HEK293 (cell line): ENCODE measurements at regions of chr11 and their contacts with region 1.

Region 1: DNA sequence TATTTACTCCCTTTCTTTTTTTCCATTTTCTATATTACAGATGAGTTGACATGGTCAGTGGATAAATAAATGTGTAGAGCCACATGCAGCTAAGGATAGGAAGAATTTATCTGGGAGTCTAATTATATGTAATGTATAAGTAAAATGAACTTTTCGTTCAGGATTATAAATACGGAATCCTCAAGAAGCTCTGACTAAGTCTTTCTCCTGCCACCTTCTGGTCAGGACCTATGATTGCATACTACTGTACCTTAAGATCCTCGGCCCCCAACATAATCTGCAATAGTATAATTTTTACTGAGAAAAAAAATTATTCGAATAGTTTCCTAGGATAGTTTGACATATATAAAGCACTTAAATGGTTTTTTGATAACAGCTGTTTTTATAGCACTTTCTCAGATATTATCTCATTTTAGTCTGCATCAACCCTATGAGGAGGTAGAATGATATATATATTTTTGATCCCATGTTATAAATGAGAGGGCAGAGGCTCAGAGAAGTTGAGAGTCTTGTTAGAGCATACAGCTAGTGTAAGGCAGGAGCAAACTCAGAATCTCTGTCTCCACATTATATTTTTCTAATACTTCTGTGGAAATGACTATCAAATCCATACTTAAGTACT is 36.1 kb downstream of the CCDC90B start:
- H3K4me3 ChIP-seq: no peak overlapping the region
- H3K27ac ChIP-seq: no peak overlapping the region
- H3K4me1 ChIP-seq: no peaks in the 10 kb centered on the region
- CTCF ChIP-seq: no peak

Region 2: DNA sequence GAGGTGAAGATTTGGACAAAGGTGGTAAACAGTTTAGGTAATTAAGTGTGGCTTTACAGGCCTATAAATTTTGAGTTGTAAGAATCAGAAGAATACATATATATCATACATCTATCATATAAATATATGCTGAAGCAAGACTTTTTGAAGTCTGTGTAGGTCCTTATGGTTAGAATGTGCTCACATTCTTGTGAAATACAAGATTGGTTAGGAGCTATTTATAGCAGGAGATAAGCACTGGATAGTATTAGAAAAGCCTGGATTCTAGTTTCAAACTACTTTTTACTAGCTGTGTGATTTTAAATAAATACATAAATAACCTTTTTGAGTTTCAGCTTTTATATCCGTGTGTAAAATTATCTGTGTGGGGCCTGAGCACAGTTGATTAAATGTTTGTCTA is 14.3 kb before region 1 on chr11:
- CTCF ChIA-PET with region 1: interaction called, 29 read pairs
- POLR2A ChIA-PET with region 1: no interaction called
- H3K4me3 ChIP-seq: no peak overlapping the region
- H3K27ac ChIP-seq: no peak overlapping the region
- H3K4me1 ChIP-seq: no peaks in the 10 kb centered on the region
- CTCF ChIP-seq: no peak

Region 3: DNA sequence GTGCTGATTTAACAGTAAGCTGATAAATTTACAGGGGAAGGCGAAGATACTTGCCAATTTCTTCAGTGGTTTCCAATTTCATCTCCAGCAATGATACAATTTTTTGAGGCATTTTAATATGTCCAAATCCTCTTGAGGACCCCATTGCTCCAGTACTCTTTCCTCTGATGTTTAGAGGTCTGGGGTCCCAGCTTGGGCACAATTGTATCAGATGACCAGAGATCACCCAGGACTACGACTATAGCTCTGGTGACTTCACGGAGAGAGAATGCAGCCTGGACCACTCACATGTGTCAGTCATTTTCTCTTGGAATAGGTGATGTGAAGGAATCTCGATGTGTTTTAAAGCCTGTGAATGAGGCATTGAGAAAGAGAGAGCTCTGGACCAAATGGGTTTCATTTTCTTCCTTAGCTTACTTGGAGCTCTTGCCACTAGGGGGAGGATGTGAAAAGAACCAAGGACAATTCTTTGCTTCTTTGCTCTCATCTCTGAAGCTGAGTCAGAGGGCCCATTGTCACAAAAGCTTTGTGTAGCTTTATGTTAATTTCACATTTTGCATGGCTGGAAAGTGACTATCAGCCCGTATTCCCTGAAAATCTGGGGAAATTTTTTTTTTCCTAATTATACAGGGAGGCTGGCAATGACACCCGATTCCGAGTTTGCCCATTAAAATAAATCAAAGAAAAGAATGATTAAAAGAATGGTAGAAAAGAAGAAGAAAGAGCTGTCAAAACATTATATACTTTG is 42.8 kb after region 1 on chr11:
- CTCF ChIA-PET with region 1: interaction called, 14 read pairs
- POLR2A ChIA-PET with region 1: no interaction called
- H3K4me3 ChIP-seq: no peak overlapping the region
- H3K27ac ChIP-seq: no peak overlapping the region
- H3K4me1 ChIP-seq: no peaks in the 10 kb centered on the region
- CTCF ChIP-seq: no peak